ENCODE measurements at regions of chr20 and their contacts with region 1.

Region 1: DNA sequence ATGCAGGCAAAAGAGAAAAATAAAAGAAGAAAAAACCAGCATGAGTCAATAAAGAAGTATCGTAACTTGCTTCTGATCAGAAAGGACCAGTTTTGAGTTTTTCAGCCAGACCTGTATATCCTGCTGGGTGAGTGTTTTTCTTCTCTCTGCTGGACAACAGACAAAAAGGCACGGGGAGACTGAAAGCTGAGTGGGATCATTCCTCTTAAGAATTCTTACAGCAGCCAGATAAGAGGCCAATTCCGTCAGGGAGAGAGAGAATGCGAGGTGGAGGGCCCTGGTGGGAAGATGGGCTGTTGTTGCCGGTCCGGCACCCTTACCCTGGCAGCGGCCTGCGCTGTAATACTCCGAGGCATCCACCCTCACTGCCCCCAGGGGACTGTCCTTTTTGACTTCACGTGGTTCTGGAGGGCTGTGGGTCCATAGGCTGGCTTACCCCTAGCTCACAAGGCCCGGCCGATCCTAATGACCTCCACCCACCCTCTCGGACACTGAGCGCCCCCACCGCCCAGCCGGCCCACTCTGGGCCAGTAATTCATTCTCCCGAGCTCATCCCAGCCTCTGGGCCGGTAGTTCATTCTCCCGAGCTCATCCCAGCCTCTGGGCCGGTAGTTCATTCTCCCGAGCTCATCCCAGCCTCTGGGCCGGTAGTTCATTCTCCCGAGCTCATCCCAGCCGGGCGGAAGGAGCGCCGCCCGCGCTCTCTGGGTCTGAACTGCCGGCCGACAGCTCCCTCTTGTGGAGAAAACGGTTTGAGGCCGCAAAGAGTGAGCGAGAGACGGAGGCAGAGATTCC is 118.3 kb upstream of the SIRPA start:
- H3K4me3 ChIP-seq: peak overlapping the region; percentile 63
- H3K27ac ChIP-seq: peak overlapping the region; percentile 57; the same call in 1 of the 2 replicates
- H3K4me1 ChIP-seq: peaks cover 4% of the 10 kb centered on the region
- CTCF ChIP-seq: peak; percentile 70

Region 2: GRCh38 chr20:1757072-1757471 is 19.8 kb before region 1 on chr20:
- CTCF ChIA-PET with region 1: interaction called, 11 read pairs
- POLR2A ChIA-PET with region 1: no interaction called
- H3K4me3 ChIP-seq: no peak overlapping the region
- H3K27ac ChIP-seq: no peak overlapping the region
- H3K4me1 ChIP-seq: no peaks in the 10 kb centered on the region
- CTCF ChIP-seq: no peak

Region 3: DNA sequence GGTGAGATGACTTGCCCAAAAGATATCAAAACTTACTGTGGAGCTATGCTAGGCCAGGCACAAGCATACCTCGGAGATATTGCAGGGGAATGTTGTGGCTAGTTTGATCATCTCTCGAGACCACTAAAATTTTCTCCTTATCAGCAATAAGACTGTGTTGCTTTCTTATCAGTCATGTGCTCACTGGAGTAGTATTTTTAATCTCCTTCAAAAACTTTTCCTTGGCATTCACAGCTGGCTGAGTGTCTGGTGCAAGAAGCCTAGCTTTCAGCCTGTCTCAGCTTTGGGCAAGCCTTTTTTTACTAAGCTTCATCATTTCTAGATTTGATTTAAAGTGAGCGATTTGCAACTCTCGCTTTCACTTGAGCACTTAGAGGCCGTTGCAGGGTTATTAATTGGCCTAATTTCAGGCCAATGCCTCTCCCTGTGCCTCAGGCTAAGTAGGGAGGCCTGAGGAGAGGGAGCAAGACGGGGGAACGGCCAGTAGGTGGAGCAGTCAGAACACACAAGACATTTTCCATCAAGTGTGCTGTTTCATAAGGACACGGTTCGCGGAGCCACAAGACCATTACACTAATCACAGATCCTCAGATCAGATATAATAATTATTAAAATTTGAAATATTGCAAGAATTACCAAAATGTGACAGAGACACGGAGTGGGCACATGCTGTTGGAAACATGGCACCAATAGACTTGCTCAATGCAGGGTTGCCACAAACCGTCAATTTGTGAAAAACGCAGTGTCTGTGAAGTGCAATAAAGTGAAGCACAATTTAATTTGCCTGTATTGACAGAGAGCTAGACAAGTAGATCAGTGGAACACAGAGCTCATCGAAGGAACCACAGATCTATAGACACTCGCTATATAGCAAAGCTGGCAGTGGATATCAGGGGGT is 12.5 kb before region 1 on chr20:
- CTCF ChIA-PET with region 1: interaction called, 70 read pairs
- POLR2A ChIA-PET with region 1: interaction called, 5 read pairs
- H3K4me3 ChIP-seq: no peak overlapping the region
- H3K27ac ChIP-seq: no peak overlapping the region
- H3K4me1 ChIP-seq: 0 out of 2 replicates have a peak, but pooled peaks cover 3% of the 10 kb centered on the region
- CTCF ChIP-seq: 0 out of 2 replicates have a peak, but pooled peaks have one; percentile 57

Region 4: GRCh38 chr20:1790386-1790785 is 13.5 kb after region 1 on chr20:
- CTCF ChIA-PET with region 1: interaction called, 20 read pairs
- POLR2A ChIA-PET with region 1: interaction called, 6 read pairs
- H3K4me3 ChIP-seq: no peak overlapping the region
- H3K27ac ChIP-seq: no peak overlapping the region
- H3K4me1 ChIP-seq: no peaks in the 10 kb centered on the region
- CTCF ChIP-seq: no peak

Region 5: DNA sequence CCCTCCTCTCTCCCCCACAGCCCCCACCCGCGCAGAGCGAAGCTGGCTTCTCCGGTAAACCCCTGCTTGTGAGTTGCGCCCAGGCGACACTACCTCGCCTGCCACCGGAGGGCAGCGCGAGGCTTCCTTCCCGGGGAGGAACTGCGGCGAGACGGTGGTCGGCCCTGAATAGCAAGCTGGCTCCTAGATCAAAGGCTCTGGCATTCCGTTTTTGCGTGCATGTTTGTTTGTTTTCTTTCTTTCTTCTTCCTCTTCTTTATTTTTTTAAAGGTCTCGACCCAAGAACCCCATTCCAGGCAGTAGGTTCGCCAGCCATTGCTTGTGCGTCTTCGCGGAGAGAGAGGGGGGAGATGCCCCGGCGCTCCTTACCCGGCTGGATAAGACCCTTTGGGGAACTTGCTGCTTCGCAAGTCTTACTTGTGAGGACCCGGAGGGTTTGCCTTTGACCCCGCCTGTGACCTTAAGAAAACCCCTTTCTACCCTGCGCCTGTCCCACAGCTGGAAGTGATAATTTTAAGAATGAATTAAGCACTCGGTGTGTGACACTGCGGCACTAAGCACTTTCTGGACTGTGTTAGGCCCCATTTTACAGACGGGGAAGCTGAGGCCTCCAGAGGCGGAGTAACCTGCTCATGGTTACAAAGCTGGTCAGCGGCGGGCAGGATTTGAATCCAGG is 25.6 kb after region 1 on chr20:
- CTCF ChIA-PET with region 1: interaction called, 32 read pairs
- POLR2A ChIA-PET with region 1: interaction called, 4 read pairs
- H3K4me3 ChIP-seq: no peak overlapping the region
- H3K27ac ChIP-seq: no peak overlapping the region
- H3K4me1 ChIP-seq: 0 out of 2 replicates have a peak, but pooled peaks cover 3% of the 10 kb centered on the region
- CTCF ChIP-seq: peak; percentile 43; the same call in 1 of the 2 replicates

Region 6: DNA sequence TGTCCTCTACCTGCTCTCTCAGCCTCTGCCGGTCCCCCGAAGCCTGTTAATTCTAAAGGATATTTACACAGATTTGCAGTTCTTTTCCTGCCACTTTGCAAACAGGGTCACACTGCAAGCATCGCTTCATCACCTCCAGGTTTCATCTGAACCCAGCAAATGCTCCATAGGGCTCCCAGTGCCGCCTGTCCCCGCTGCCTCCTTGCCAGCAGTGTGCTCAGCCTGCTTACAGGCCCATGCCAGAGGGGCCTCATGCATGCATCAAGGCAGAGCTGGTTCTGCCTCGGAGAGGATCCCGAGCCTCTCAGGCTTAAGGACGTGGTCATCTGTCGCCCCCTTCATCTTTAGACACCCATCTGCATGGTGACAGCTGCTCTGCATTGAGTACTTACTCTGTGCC is 128.8 kb after region 1 on chr20:
- CTCF ChIA-PET with region 1: interaction called, 10 read pairs
- POLR2A ChIA-PET with region 1: no interaction called
- H3K4me3 ChIP-seq: no peak overlapping the region
- H3K27ac ChIP-seq: no peak overlapping the region
- H3K4me1 ChIP-seq: no peaks in the 10 kb centered on the region
- CTCF ChIP-seq: no peak

Region 7: DNA sequence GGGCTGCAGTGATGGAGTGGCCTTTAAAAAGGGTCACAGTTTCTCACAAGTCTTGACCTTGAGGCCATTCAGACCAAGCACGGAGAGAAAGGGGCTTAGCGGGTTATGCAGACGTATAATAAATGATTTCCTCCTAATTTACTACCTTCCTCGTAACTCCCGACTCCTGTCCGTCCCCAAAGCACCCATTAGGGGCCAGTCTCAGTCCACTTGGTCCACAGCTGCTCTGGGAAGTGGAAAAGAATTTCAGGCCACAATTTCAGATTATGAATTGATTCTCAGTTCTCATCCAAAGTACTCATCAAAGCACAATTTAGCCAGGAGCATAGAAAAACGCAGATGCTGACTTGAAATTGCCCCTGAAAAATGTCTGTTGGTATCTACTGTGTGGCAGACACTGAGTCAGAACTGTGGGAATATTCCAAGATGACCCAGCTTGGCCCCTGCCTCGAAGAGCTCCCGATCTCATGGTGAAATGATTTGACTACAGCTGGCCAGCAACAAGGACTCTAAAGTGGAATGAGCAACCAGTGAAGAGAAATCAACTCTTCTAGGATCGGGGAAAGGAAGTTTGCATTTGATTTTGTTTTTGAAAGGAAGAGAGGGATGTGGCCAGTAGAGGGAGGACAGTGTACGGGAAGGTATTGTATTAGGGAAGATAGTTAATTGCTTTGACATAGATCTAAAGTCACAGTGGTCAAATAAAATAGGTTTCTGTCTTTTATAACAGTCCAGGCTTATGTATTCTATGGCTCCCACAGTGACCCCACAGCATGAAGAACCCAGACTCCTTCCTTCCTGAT is 309.5 kb after region 1 on chr20:
- CTCF ChIA-PET with region 1: no interaction called
- POLR2A ChIA-PET with region 1: interaction called, 11 read pairs
- H3K4me3 ChIP-seq: no peak overlapping the region
- H3K27ac ChIP-seq: no peak overlapping the region
- H3K4me1 ChIP-seq: no peaks in the 10 kb centered on the region
- CTCF ChIP-seq: no peak

Region 8: DNA sequence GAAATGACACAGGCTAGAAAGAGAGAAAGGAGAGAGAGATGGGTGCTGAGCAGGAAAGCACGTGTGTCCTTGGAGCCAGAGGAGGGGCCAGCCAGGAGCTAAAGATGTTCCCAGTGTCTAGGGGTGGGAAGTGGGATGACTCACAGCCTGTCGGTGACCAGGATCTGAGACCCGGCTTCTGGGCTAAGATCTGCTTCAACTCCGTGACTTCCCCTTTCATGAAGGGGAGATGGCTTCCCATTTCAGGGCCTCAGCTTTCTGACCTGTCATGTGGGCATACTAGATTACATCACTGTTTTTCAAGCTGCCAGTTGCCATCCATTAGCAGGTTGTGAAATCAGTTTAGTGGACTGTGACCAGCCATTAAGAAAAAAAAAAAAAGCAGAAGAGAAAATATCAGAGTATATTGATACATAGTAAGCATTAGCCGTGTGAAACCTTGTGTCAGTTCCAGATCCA is 524.3 kb after region 1 on chr20:
- CTCF ChIA-PET with region 1: no interaction called
- POLR2A ChIA-PET with region 1: no interaction called
- H3K4me3 ChIP-seq: no peak overlapping the region
- H3K27ac ChIP-seq: no peak overlapping the region
- H3K4me1 ChIP-seq: no peaks in the 10 kb centered on the region
- CTCF ChIP-seq: no peak

Region 9: DNA sequence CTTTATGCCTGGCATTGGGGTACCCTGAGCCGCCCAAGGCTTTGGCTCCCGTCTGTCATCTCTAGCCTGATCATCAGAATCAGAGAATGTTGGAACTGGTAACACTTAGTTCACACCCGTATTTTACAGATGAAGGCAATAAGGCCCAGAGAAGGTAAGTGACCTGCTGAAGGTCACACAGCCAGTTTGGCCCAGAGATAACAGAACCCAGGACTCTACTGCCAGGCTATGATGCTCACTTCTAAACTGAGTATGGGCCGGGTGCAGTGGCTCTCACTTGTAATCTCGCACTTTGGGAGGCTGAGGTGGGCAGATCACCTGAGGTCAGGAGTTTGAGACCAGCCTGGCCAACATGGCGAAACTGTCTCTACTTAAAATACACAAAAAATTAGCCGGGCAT is 602.0 kb after region 1 on chr20:
- CTCF ChIA-PET with region 1: no interaction called
- POLR2A ChIA-PET with region 1: no interaction called
- H3K4me3 ChIP-seq: no peak overlapping the region
- H3K27ac ChIP-seq: no peak overlapping the region
- H3K4me1 ChIP-seq: no peaks in the 10 kb centered on the region
- CTCF ChIP-seq: no peak

Measured in HEK293 (cell line).